Activated naive CD4-positive, alpha-beta T cell treated with anti-CD3 and anti-CD28 coated beads for 36 hours (primary cell): ENCODE measurements at regions of chr14 and their contacts with region 1.

Region 1: DNA sequence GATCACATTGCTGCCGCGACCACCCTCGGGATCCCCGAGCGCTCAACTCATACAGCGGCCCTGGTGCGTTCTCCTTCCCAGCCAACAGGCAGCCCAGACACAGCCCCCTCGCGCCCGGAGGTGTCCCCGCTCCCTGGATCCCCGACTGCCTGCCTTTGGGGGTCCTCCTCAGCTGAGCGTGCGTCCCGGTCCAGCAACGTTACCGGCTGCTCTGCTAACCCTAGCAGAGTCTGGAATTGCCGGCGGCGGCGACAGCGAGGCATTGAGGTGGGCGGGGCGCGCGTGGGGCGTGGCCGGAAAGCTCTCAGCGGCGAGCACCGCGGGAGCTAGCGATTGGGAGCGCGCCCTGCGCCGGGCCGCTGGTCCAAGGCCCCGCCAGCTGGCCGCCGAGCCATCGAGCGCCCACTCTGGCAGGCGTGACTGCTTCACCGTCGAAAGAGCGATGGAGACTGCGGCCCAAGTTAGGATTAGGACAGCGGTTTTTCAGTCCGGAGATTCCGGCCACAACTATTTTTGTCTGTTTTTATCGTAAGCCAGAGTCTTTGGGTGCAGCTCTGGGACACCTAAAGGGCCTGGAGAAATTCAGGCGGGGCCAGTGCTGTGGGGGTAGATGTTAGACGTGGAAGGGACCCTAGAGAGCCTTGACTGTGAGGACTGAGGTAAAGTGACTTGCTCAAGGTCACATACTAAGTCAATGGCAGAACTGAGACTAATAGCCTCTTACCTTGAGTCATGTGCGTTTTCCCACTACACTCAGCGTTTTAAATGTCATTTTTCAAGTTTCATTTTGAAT is at the start of gene HEATR5A:
- DNase-seq: peak; percentile 90
- H3K4me3 Mint-ChIP-seq: peak within 1 kb of the TSS; percentile 91
- H3K27ac Mint-ChIP-seq: peak within 1 kb of the TSS; percentile 82
- H3K4me1 Mint-ChIP-seq: peaks cover 17% of the 10 kb centered on the region
- H3K27me3 Mint-ChIP-seq: no peaks in the 10 kb centered on the region
- total RNA-seq, gene HEATR5A: 3.5 to 6.0 TPM

Region 2: GRCh38 chr14:31270196-31270772 is 150.2 kb before region 1 on chr14:
- CTCF ChIA-PET with region 1: no interaction called
- intact Hi-C with region 1: loop called (anchors 1 kb)
- DNase-seq: peak; percentile 33
- H3K4me3 Mint-ChIP-seq: no peak overlapping the region
- H3K27ac Mint-ChIP-seq: no peak overlapping the region
- H3K4me1 Mint-ChIP-seq: peaks cover 7% of the 10 kb centered on the region
- H3K27me3 Mint-ChIP-seq: no peaks in the 10 kb centered on the region

Region 3: GRCh38 chr14:31400031-31400638 is 20.4 kb before region 1 on chr14:
- CTCF ChIA-PET with region 1: interaction called, 3 read pairs
- intact Hi-C with region 1: loop called (anchors 1 kb)
- DNase-seq: no peak
- H3K4me3 Mint-ChIP-seq: no peak overlapping the region
- H3K27ac Mint-ChIP-seq: no peak overlapping the region
- H3K4me1 Mint-ChIP-seq: peaks cover 5% of the 10 kb centered on the region
- H3K27me3 Mint-ChIP-seq: no peaks in the 10 kb centered on the region

Region 4: GRCh38 chr14:31456841-31457664 is 36.5 kb after region 1 on chr14 and contains the start of gene DTD2:
- CTCF ChIA-PET with region 1: interaction called, 4 read pairs
- intact Hi-C with region 1: loop called (anchors 1 kb)
- DNase-seq: peak; percentile 93
- H3K4me3 Mint-ChIP-seq: peak within 1 kb of the TSS; percentile 94
- H3K27ac Mint-ChIP-seq: peak within 1 kb of the TSS; percentile 88
- H3K4me1 Mint-ChIP-seq: peaks cover 29% of the 10 kb centered on the region
- H3K27me3 Mint-ChIP-seq: no peaks in the 10 kb centered on the region
- total RNA-seq, gene DTD2: 12.9 to 13.3 TPM

Region 5: GRCh38 chr14:31510222-31510621 is 89.7 kb after region 1 on chr14:
- CTCF ChIA-PET with region 1: no interaction called
- intact Hi-C with region 1: no loop called
- DNase-seq: no peak
- H3K4me3 Mint-ChIP-seq: no peak overlapping the region
- H3K27ac Mint-ChIP-seq: no peak overlapping the region
- H3K4me1 Mint-ChIP-seq: no peaks in the 10 kb centered on the region
- H3K27me3 Mint-ChIP-seq: no peaks in the 10 kb centered on the region